ENCODE measurements at regions of chr2 and their contacts with region 1.

Region 1: GRCh38 chr2:125516496-125517109 is 1139.4 kb upstream of the GYPC start:
- DNase-seq: peak; percentile 5
- H3K4me3 Mint-ChIP-seq: no peak overlapping the region
- H3K27ac Mint-ChIP-seq: no peak overlapping the region
- H3K4me1 Mint-ChIP-seq: no peaks in the 10 kb centered on the region
- H3K27me3 Mint-ChIP-seq: no peaks in the 10 kb centered on the region

Region 2: GRCh38 chr2:124027182-124027581 is 1489.4 kb before region 1 on chr2:
- CTCF ChIA-PET with region 1: no interaction called
- intact Hi-C with region 1: loop called (anchors 10 kb)
- DNase-seq: peak; percentile 14
- H3K4me3 Mint-ChIP-seq: no peak overlapping the region
- H3K27ac Mint-ChIP-seq: no peak overlapping the region
- H3K4me1 Mint-ChIP-seq: no peaks in the 10 kb centered on the region
- H3K27me3 Mint-ChIP-seq: peaks cover 37% of the 10 kb centered on the region